CD8-positive, alpha-beta T cell (primary cell): ENCODE measurements at regions of chr16 and their contacts with region 1.

Region 1: DNA sequence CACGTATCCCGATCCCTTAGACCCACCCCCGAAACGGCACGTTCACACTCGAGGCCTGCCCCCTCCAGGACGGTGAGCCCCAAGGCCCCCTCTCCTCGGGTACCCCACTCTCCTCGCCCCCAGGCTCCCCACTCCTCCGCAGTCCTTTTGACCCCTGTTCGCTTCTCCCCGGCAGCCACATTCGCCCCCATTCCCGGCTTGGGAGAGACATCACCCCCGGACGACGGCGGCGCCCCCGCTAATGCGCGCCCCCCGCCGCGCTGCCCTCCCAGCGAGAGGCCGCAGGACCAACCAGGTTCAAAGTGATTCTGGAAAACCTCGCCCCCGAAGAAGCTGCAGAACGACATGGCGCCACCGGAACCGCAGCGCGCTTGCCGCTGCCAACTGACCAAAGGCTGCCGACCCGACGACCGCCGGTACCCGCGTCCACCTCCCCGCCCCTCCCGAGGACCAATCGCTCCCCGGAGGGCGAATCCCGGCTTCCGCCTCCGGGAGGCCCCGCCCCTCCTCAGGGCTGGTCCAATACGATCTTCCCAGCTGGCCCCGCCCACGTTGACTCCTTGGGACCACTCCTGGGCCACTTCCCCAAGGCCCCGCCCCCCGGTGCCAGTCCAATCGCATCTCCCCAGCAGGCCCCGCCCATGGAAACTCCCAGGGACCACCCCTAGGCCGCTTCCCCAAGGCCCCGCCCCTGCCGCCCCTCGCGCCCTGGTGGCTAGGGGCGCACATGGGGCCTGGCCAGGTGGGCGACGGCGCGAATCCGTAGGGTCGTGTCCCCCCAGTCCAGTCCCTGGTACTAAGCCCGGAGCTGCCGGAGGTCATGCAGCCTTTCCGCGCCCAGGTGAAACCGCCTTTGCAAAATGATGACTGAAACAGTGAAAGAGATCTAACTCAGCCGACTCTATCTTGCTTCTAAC is at the start of gene MSRB1:
- DNase-seq: peak; percentile 96 to 100 (median 99)
- ATAC-seq: peak; percentile 99
- H3K4me3 ChIP-seq: peak within 1 kb of the TSS; percentile 83 to 94
- H3K4me3 Mint-ChIP-seq: peak within 1 kb of the TSS; percentile 85
- H3K27ac ChIP-seq: peak within 1 kb of the TSS in 1 of 2 experiments; percentile 62
- H3K27ac Mint-ChIP-seq: peak within 1 kb of the TSS; percentile 55
- H3K4me1 ChIP-seq: peaks cover 13% of the 10 kb centered on the region
- H3K4me1 Mint-ChIP-seq: peaks cover 11% of the 10 kb centered on the region
- H3K27me3 ChIP-seq: no peaks in the 10 kb centered on the region
- H3K27me3 Mint-ChIP-seq: no peaks in the 10 kb centered on the region
- CTCF ChIP-seq: no peak
- total RNA-seq, gene MSRB1: 1.9 to 3.0 TPM

Region 2: DNA sequence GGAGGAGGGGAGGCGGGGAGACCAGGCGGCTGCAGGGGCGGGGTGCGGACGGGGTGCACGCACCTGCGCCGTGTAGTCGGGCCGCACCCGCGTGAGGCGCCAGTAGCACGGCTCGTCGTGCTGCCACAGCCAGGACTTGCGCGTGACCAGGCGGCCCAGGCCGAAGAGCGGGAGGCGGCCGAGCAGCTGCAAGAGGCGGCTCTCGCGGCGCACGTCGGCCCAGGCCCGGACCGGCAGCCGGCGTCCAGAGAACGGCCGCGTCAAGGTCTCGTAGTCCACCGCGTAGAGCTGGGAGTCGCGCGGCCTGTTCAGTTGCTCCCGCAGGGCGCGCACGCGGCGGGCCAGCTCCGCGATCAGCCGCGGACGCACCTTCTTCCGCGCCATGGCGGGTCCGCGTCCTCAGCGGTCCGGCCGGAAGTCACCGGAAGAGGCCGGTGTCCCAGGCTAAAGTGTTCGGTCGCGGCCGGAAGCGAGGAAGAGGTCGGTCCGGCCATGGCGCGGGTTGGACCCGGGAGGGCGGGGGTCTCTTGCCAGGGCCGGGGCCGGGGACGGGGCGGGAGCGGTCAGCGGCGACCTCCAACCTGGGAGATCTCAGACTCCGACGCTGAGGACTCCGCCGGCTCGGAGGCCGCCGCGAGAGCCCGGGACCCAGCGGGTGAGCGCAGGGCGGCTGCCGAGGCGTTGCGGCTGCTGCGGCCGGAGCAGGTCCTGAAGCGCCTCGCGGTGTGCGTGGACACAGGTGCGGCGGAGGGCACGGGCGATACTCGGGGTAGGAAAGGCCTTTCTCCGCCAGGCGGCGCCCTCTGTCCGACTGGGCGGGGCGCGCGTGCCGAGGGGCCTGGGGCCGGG is 170.1 kb before region 1 on chr16 and contains the starts of genes EME2 and MRPS34:
- CTCF ChIA-PET with region 1: no interaction called
- POLR2A ChIA-PET with region 1: no interaction called
- intact Hi-C with region 1: loop called in 1 of 2 experiments (anchors 5 kb)
- DNase-seq: peak; percentile 54 to 89 (median 78)
- ATAC-seq: peak; percentile 48
- H3K4me3 ChIP-seq: peak within 1 kb of the TSS; percentile 79 to 91
- H3K4me3 Mint-ChIP-seq: peak within 1 kb of the TSS; percentile 96
- H3K27ac ChIP-seq: peak within 1 kb of the TSS; percentile 57 to 66
- H3K27ac Mint-ChIP-seq: peak within 1 kb of the TSS; percentile 96
- H3K4me1 ChIP-seq: peaks cover 30% of the 10 kb centered on the region
- H3K4me1 Mint-ChIP-seq: peaks cover 19% of the 10 kb centered on the region
- H3K27me3 ChIP-seq: no peaks in the 10 kb centered on the region
- H3K27me3 Mint-ChIP-seq: no peaks in the 10 kb centered on the region
- CTCF ChIP-seq: peak; percentile 92
- total RNA-seq, gene EME2: 27.5 to 31.7 TPM
- total RNA-seq, gene MRPS34: 18.9 to 21.4 TPM

Region 3: GRCh38 chr16:1871974-1872635 is 71.0 kb before region 1 on chr16 and contains the start of gene MEIOB:
- CTCF ChIA-PET with region 1: no interaction called
- POLR2A ChIA-PET with region 1: no interaction called
- intact Hi-C with region 1: no loop called
- DNase-seq: peak in 7 of 9 experiments; percentile 9 to 53 (median 47)
- ATAC-seq: peak; percentile 91
- H3K4me3 ChIP-seq: no peak within 1 kb of the TSS
- H3K4me3 Mint-ChIP-seq: peak within 1 kb of the TSS; percentile 49
- H3K27ac ChIP-seq: no peak within 1 kb of the TSS
- H3K27ac Mint-ChIP-seq: no peak within 1 kb of the TSS
- H3K4me1 ChIP-seq: peaks cover 5% of the 10 kb centered on the region
- H3K4me1 Mint-ChIP-seq: peaks cover 3% of the 10 kb centered on the region
- H3K27me3 ChIP-seq: peaks cover 3 to 16% of the 10 kb centered on the region in 2 experiments
- H3K27me3 Mint-ChIP-seq: peaks cover 24% of the 10 kb centered on the region
- CTCF ChIP-seq: no peak
- total RNA-seq, gene MEIOB: not detected

Region 4: GRCh38 chr16:1929578-1930337 is 13.3 kb before region 1 on chr16:
- CTCF ChIA-PET with region 1: interaction called, 7 read pairs
- POLR2A ChIA-PET with region 1: no interaction called
- intact Hi-C with region 1: loop called in 1 of 2 experiments (anchors 1 kb)
- DNase-seq: peak; percentile 85 to 97 (median 92)
- ATAC-seq: peak; percentile 100
- H3K4me3 ChIP-seq: peak overlapping the region; percentile 41
- H3K4me3 Mint-ChIP-seq: peak overlapping the region; percentile 82
- H3K27ac ChIP-seq: no peak overlapping the region
- H3K27ac Mint-ChIP-seq: no peak overlapping the region
- H3K4me1 ChIP-seq: no peaks in the 10 kb centered on the region
- H3K4me1 Mint-ChIP-seq: peaks cover 2% of the 10 kb centered on the region
- H3K27me3 ChIP-seq: peaks cover 0 to 3% of the 10 kb centered on the region in 2 experiments
- H3K27me3 Mint-ChIP-seq: no peaks in the 10 kb centered on the region
- CTCF ChIP-seq: peak; percentile 99

Region 5: GRCh38 chr16:1959269-1960049 is 16.4 kb after region 1 on chr16 and contains the start of gene NDUFB10:
- CTCF ChIA-PET with region 1: interaction called, 5 read pairs
- POLR2A ChIA-PET with region 1: interaction called, 12 read pairs
- intact Hi-C with region 1: loop called (anchors 1 kb)
- DNase-seq: peak; percentile 80 to 96 (median 92)
- ATAC-seq: peak; percentile 86
- H3K4me3 ChIP-seq: peak within 1 kb of the TSS; percentile 91 to 95
- H3K4me3 Mint-ChIP-seq: peak within 1 kb of the TSS; percentile 90
- H3K27ac ChIP-seq: peak within 1 kb of the TSS; percentile 75 to 80
- H3K27ac Mint-ChIP-seq: peak within 1 kb of the TSS; percentile 89
- H3K4me1 ChIP-seq: peaks cover 39% of the 10 kb centered on the region
- H3K4me1 Mint-ChIP-seq: peaks cover 39% of the 10 kb centered on the region
- H3K27me3 ChIP-seq: no peaks in the 10 kb centered on the region
- H3K27me3 Mint-ChIP-seq: no peaks in the 10 kb centered on the region
- CTCF ChIP-seq: peak; percentile 59
- total RNA-seq, gene NDUFB10: 36.2 to 38.4 TPM

Region 6: DNA sequence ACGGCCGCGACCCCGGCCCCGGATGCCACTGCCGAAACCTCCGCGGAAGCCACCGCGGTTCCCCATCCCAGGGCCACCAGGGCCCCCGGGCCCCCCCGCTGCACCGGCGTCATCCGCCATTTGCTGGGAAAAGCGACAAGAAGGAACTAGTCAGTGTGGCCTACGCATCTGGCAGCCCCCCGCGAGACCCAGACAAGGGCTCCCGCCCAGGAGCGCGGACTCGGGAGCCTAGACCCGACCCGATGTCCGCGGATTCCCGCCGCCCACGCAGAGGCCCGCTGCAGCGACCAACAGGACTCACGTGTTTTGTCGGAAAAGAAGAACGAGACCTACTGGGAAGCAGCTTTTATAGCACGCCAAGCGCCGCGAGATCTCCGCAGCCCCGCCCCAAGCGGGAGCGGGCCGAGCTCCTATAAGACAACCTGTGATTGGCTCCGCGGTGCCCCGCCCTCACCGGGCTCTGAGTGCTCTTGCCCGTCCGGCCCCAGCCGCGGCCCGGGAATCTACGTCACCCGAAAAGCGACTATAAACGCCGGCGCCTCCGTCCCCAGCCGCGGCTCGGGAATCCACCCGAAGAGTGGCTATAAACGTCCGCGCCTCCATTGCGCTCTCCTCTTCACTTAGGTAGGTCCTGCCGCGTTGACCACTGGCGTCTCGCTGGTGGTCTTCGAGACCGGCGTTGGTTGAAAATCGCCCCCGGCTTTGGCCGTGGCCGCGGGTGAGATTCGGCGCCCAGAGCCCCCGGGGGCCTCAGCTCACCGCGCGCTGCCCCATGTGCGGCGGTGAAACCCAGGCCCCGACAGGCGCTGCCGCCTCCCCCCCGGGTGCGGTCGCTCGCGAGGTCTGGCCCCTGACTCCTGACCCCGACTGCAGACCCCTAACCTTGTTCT is 21.7 kb after region 1 on chr16 and contains the start of gene RPS2:
- CTCF ChIA-PET with region 1: interaction called, 5 read pairs
- POLR2A ChIA-PET with region 1: interaction called, 12 read pairs
- intact Hi-C with region 1: loop called (anchors 1 kb)
- DNase-seq: peak; percentile 92 to 99 (median 98)
- ATAC-seq: peak; percentile 89
- H3K4me3 ChIP-seq: peak within 1 kb of the TSS; percentile 82 to 99
- H3K4me3 Mint-ChIP-seq: peak within 1 kb of the TSS; percentile 94
- H3K27ac ChIP-seq: peak within 1 kb of the TSS; percentile 98 to 99
- H3K27ac Mint-ChIP-seq: peak within 1 kb of the TSS; percentile 96
- H3K4me1 ChIP-seq: peaks cover 41% of the 10 kb centered on the region
- H3K4me1 Mint-ChIP-seq: peaks cover 45% of the 10 kb centered on the region
- H3K27me3 ChIP-seq: no peaks in the 10 kb centered on the region
- H3K27me3 Mint-ChIP-seq: no peaks in the 10 kb centered on the region
- CTCF ChIP-seq: no peak
- total RNA-seq, gene RPS2: 4,060 to 4,094 TPM

Region 7: GRCh38 chr16:1991948-1992703 is 49.1 kb after region 1 on chr16:
- CTCF ChIA-PET with region 1: no interaction called
- POLR2A ChIA-PET with region 1: no interaction called
- intact Hi-C with region 1: loop called (anchors 1 kb)
- DNase-seq: peak; percentile 95 to 99 (median 97)
- ATAC-seq: peak; percentile 88
- H3K4me3 ChIP-seq: peak overlapping the region; percentile 53 to 60
- H3K4me3 Mint-ChIP-seq: peak overlapping the region; percentile 39
- H3K27ac ChIP-seq: peak overlapping the region; percentile 27 to 45
- H3K27ac Mint-ChIP-seq: peak overlapping the region; percentile 80
- H3K4me1 ChIP-seq: peaks cover 19% of the 10 kb centered on the region
- H3K4me1 Mint-ChIP-seq: peaks cover 26% of the 10 kb centered on the region
- H3K27me3 ChIP-seq: peaks cover 9 to 13% of the 10 kb centered on the region in 2 experiments
- H3K27me3 Mint-ChIP-seq: peaks cover 9% of the 10 kb centered on the region
- CTCF ChIP-seq: no peak